ENCODE measurements at regions of chr12 and their contacts with region 1.

Region 1: DNA sequence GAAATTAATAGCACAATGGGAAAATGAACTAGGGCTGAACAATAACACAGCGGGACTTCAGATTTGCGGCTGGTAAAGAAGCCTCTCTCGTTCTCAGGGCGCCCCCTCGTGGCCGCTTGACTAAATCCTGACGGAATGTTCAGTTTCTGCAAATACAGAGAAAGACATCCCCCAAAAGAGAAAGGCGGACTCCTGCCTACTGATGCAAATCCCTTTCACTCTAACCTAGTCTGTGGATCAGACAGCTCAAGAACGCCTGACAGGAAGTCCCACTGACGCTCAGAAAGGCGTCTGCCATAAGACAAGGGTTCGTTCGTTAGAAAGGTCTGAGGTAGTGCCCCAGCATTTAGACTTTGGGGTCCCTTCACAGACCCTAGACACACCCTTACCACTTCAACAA is 2.5 kb downstream of the NUAK1 start:
- DNase-seq: peak; percentile 79
- H3K4me3 Mint-ChIP-seq: no peak overlapping the region
- H3K27ac Mint-ChIP-seq: no peak overlapping the region
- H3K4me1 Mint-ChIP-seq: peaks cover 2% of the 10 kb centered on the region
- H3K27me3 Mint-ChIP-seq: peaks cover 67% of the 10 kb centered on the region

Region 2: GRCh38 chr12:105420659-105421240 is 715.5 kb before region 1 on chr12:
- CTCF ChIA-PET with region 1: interaction called, 28 read pairs
- DNase-seq: peak; percentile 78
- H3K4me3 Mint-ChIP-seq: no peak overlapping the region
- H3K27ac Mint-ChIP-seq: no peak overlapping the region
- H3K4me1 Mint-ChIP-seq: no peaks in the 10 kb centered on the region
- H3K27me3 Mint-ChIP-seq: peaks cover 4% of the 10 kb centered on the region

Region 3: DNA sequence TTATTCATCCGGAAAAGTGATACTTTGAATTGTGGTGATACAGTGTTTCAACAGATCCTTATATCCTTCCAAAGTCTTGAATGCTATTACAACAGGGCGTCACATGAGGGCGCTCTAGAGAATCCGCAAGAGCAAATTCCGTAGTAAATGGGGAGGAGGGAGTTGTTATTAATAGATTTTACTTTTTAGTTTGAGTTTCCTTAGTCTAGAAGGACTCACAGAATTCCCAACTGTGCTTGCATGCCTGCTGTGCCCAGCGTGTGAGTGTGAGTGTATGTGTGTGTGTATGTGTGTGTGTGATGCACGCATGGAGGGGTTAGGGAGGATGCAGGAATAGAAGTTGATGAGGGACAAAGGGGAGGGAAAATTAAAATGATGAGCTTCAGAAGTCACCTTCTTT is 430.5 kb before region 1 on chr12:
- CTCF ChIA-PET with region 1: interaction called, 15 read pairs
- DNase-seq: no peak
- H3K4me3 Mint-ChIP-seq: no peak overlapping the region
- H3K27ac Mint-ChIP-seq: no peak overlapping the region
- H3K4me1 Mint-ChIP-seq: no peaks in the 10 kb centered on the region
- H3K27me3 Mint-ChIP-seq: peaks cover 5% of the 10 kb centered on the region

Region 4: GRCh38 chr12:106149096-106149784 is 13.0 kb after region 1 on chr12:
- CTCF ChIA-PET with region 1: interaction called, 25 read pairs
- DNase-seq: no peak
- H3K4me3 Mint-ChIP-seq: no peak overlapping the region
- H3K27ac Mint-ChIP-seq: no peak overlapping the region
- H3K4me1 Mint-ChIP-seq: no peaks in the 10 kb centered on the region
- H3K27me3 Mint-ChIP-seq: peaks cover 21% of the 10 kb centered on the region

Measured in activated naive CD4-positive, alpha-beta T cell treated with anti-CD3 and anti-CD28 coated beads, Interleukin-2, amount 10 ng/mL, durations not matched to agents 7 days and 5 days (primary cell).